Heart left ventricle (tissue), 16 donors: ENCODE measurements at regions of chr5 and their contacts with region 1.

Region 1: DNA sequence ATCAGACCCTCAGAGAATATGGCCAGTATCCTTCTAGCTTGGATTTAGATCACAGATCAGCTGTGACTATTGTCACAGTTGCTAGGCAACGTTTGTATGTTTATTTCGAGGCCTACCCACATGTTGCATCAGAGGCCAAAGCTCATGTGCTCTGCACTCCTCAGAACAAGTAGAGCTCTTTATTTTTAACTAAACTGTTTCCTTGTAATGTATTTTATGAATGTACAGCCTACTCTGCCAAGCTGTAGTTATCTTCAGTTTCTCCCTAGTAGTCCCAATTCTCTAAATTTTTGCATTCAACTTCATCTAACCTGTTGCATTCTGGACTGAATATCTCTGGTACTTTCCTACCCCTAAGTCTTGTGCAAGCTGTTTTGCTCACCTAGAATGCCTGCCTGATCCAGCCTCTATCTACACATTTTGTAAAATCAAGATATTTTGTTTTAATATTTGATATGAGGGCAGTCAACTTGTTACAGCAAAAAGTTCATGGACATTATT is 52.8 kb downstream of the CAST start:
- DNase-seq: peak in 4 of 5 donors; percentile 60 to 74 (median 68)
- ATAC-seq: peak; percentile 68 to 90 (median 84)
- H3K4me3 ChIP-seq: no peak overlapping the region
- H3K27ac ChIP-seq: peak overlapping the region; percentile 17 to 98 (median 72)
- H3K4me1 ChIP-seq: peaks cover 8 to 99% (median 71%) of the 10 kb centered on the region in 12 donors
- H3K27me3 ChIP-seq: no peaks in the 10 kb centered on the region
- CTCF ChIP-seq: no peak
- POLR2A ChIP-seq: peak in 1 of 2 donors; percentile 18

Region 2: GRCh38 chr5:96662725-96663513 is 52.1 kb before region 1 on chr5:
- intact Hi-C with region 1: loop called in 1 of 10 experiments (anchors 10 kb)
- DNase-seq: peak; percentile 91 to 96 (median 94)
- ATAC-seq: peak; percentile 87 to 95 (median 94)
- H3K4me3 ChIP-seq: peak overlapping the region; percentile 68 to 99 (median 92)
- H3K27ac ChIP-seq: peak overlapping the region; percentile 88 to 100 (median 98)
- H3K4me1 ChIP-seq: peaks cover 0 to 43% (median 21%) of the 10 kb centered on the region in 12 donors
- H3K27me3 ChIP-seq: no peaks in the 10 kb centered on the region
- CTCF ChIP-seq: no peak
- POLR2A ChIP-seq: peak; percentile 28 to 81

Region 3: GRCh38 chr5:96935559-96936430 is 220.8 kb after region 1 on chr5 and contains the start of gene LNPEP:
- intact Hi-C with region 1: no loop called
- DNase-seq: peak; percentile 96 to 98 (median 97)
- ATAC-seq: peak; percentile 90 to 93 (median 92)
- H3K4me3 ChIP-seq: peak within 1 kb of the TSS; percentile 60 to 92 (median 84)
- H3K27ac ChIP-seq: peak within 1 kb of the TSS; percentile 89 to 99 (median 97)
- H3K4me1 ChIP-seq: peaks cover 0 to 67% (median 42%) of the 10 kb centered on the region in 12 donors
- H3K27me3 ChIP-seq: no peaks in the 10 kb centered on the region
- CTCF ChIP-seq: no peak
- POLR2A ChIP-seq: peak in 1 of 2 donors; percentile 75
- total RNA-seq, gene LNPEP: 47.4 to 82.2 (median 56.3) TPM